ENCODE measurements at regions of chrX and their contacts with region 1.

Region 1: GRCh38 chrX:131752489-131753198 is 208.8 kb downstream of the OR13H1 start:
- DNase-seq: no peak
- H3K4me3 ChIP-seq: no peak overlapping the region
- H3K27ac ChIP-seq: no peak overlapping the region
- H3K4me1 ChIP-seq: no peaks in the 10 kb centered on the region
- H3K27me3 ChIP-seq: no peaks in the 10 kb centered on the region
- CTCF ChIP-seq: no peak

Region 2: DNA sequence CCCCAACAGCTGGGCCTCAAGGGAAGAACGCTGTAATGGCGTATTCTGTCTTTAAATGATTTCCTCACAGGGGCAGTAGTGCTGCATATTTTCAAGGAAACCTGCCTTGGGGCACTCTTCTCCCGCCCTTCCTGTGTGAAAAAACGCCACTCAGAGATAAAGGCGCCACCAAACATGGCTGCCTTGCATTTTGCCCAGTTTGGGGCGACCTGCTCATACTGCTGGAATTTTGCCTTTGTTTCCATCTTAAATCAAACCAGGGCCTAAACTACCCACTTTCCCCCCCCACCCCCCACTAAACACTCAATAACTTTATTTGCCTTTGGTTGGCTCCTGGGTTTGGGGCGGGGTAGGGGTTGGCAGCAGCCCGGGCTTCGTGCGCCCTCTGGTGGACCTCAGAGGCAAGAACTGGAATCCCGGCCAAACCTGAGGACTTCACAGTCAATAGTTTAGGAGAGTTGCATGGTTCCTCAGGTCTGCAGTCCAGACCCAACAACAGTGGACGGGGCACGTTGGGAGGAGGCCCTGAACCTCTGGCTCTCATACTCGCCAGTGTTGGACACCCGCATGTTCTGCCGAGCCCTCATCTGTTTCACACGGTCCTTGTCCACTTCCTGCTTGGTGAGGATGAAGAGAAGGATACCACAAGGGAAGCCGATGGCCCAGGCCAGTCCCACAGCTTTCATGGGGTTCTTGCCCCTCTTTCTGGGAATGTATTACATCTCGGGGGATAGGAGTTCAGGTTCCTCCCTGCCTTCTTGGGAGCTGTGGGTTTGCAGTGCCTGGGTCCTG is 50.4 kb after region 1 on chrX:
- CTCF ChIA-PET with region 1: no interaction called
- POLR2A ChIA-PET with region 1: no interaction called
- intact Hi-C with region 1: loop called (anchors 1 kb)
- DNase-seq: peak in 1 of 2 experiments; percentile 21
- H3K4me3 ChIP-seq: no peak overlapping the region
- H3K27ac ChIP-seq: no peak overlapping the region
- H3K4me1 ChIP-seq: no peaks in the 10 kb centered on the region
- H3K27me3 ChIP-seq: no peaks in the 10 kb centered on the region
- CTCF ChIP-seq: peak; percentile 52